ENCODE measurements at regions of chr3 and their contacts with region 1.

Region 1: GRCh38 chr3:149572796-149573414 is 84.9 kb downstream of the WWTR1 start:
- DNase-seq: no peak
- H3K4me3 ChIP-seq: no peak overlapping the region
- H3K4me3 Mint-ChIP-seq: no peak overlapping the region
- H3K27ac Mint-ChIP-seq: no peak overlapping the region
- H3K4me1 ChIP-seq: no peaks in the 10 kb centered on the region
- H3K4me1 Mint-ChIP-seq: peaks cover 4% of the 10 kb centered on the region
- H3K27me3 ChIP-seq: no peaks in the 10 kb centered on the region
- H3K27me3 Mint-ChIP-seq: no peaks in the 10 kb centered on the region
- CTCF ChIP-seq: no peak

Region 2: DNA sequence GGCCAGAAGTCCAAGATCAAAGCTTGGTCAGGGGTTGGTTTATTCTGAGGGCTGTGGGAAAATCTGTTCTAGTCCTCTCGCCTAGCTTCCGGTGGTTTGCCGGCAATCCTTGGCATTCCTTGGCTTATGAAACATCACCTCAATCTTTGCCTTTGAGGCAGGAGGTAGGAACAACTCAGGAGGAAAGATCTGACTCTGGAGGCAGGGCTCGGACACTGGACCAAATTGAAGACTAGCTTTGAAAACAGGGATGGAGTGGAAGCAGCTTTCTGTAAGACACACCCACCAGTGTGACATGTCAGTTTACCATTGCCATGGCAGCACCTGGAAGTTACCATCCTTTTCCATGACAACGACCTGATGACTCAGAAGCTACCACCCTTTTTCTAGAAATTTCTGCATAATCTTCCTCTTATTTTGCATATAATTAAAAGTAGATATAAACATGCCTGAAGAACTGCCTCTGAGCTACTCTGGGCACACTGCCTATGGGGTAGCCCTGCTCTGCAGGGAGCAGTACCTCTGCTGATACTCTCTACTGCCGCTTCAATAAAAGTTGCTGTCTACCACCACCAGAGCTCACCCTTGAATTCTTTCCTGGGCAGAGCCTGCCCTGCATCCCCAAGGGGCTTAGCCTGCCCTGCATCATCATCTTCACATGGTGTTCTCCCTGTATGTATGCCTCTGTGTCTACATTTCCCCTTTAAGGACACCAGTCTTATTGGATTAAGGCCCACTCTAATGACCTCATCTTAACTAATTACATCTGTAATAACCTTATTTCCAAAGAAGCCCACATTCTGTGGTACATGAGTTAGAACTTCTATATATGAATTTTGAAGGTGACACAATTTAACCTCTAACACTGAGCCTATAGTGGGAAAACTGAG is 136.7 kb before region 1 on chr3:
- CTCF ChIA-PET with region 1: no interaction called
- POLR2A ChIA-PET with region 1: no interaction called
- intact Hi-C with region 1: no loop called
- DNase-seq: no peak
- H3K4me3 ChIP-seq: no peak overlapping the region
- H3K4me3 Mint-ChIP-seq: no peak overlapping the region
- H3K27ac Mint-ChIP-seq: no peak overlapping the region
- H3K4me1 ChIP-seq: peaks cover 7% of the 10 kb centered on the region; the same call in 1 of the 2 replicates
- H3K4me1 Mint-ChIP-seq: peaks cover 8% of the 10 kb centered on the region
- H3K27me3 ChIP-seq: no peaks in the 10 kb centered on the region
- H3K27me3 Mint-ChIP-seq: no peaks in the 10 kb centered on the region
- CTCF ChIP-seq: no peak

Region 3: DNA sequence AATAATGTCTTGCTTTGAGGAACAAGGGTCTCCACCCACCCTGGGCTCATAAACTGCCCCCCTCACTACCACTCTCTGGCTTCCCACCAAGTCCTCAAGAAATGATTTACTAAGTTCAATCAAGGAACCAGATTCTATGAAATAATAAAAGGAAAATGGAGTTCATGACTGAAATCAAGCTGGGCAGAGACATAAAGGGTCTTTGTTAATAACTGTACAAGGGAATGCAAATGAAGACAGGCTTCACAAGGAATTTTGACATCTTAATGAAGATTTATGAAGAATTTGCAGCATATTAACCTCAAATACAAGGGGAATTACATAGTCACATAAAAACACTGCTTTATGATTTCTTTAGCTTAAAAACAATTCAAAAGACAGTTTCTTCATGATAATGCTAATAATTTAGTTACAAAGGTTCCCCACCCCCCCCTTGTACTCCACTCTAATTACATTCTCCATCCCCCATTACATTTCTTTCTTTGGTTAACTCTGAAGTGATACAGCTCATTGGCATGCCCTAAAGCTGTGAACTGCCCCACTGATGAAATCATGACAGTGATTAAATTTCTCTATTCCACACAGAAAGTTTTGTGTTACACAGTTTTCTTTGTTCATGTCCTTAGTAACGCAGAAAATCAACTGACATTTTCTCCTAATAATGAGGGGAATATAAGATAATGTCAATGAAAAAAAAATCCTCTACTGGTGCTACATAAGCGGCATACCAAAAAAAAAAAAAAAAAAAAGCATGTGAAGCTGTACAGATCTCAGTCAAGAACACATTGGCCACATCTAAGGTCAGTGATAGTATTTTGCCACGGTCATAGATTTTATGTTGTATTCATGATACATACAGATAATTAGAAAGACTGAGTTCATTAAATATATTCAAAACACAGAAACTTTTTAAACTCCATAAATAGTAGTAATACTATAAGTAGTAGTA is 30.5 kb after region 1 on chr3:
- CTCF ChIA-PET with region 1: interaction called, 11 read pairs
- POLR2A ChIA-PET with region 1: no interaction called
- intact Hi-C with region 1: no loop called
- DNase-seq: no peak
- H3K4me3 ChIP-seq: no peak overlapping the region
- H3K4me3 Mint-ChIP-seq: no peak overlapping the region
- H3K27ac Mint-ChIP-seq: no peak overlapping the region
- H3K4me1 ChIP-seq: peaks cover 27% of the 10 kb centered on the region
- H3K4me1 Mint-ChIP-seq: peaks cover 32% of the 10 kb centered on the region
- H3K27me3 ChIP-seq: no peaks in the 10 kb centered on the region
- H3K27me3 Mint-ChIP-seq: no peaks in the 10 kb centered on the region
- CTCF ChIP-seq: no peak

Measured in Caco-2 (cell line).